Right cardiac atrium (tissue), 5 donors: ENCODE measurements at regions of chr5 and their contacts with region 1.

Region 1: DNA sequence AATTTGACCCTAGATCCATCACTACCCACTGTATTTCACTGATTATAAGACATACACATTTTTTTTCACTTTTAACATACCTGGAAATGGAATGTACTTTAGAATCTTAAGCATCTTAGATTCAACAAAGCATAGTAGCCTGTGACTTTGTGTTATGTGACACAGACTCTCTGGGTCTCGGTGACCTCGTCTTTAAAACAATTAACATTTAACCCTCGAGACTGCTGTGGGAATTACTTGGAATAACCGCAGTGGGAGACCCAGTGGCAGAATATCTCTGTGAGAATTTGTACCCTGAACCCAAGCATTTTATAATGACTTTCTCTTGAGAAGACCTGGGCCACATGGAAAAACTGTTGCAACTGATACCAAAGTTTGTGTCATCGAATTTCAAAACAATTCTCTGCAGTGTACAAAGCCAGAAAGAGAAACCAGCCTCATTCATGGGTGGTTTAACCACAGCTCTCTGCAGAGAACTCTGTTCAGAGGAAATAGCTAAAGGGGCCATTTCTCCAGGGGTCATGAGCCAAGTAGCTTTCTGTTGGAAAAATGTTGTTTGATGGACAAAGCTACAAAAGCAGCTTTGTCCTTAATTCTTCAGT is 10.0 kb upstream of the RETREG1 start:
- DNase-seq: no peak
- ATAC-seq: peak in 1 of 2 donors; percentile 6
- H3K4me3 ChIP-seq: peak overlapping the region; percentile 47
- H3K27ac ChIP-seq: peak overlapping the region; percentile 89
- H3K4me1 ChIP-seq: no peaks in the 10 kb centered on the region
- H3K27me3 ChIP-seq: no peaks in the 10 kb centered on the region

Region 2: GRCh38 chr5:16508730-16509531 is 117.8 kb before region 1 on chr5:
- intact Hi-C with region 1: loop called in 1 of 4 experiments (anchors 10 kb)
- DNase-seq: peak; percentile 64 to 89 (median 83)
- ATAC-seq: peak; percentile 92 to 93
- H3K4me3 ChIP-seq: peak overlapping the region; percentile 71
- H3K27ac ChIP-seq: peak overlapping the region; percentile 81
- H3K4me1 ChIP-seq: no peaks in the 10 kb centered on the region
- H3K27me3 ChIP-seq: no peaks in the 10 kb centered on the region